ENCODE measurements at regions of chr19 and their contacts with region 1.

Region 1: GRCh38 chr19:18251587-18252369 is 22.5 kb downstream of the IQCN start:
- DNase-seq: peak; percentile 62
- ATAC-seq: peak; percentile 89
- H3K4me3 ChIP-seq: no peak overlapping the region
- H3K27ac ChIP-seq: no peak overlapping the region
- H3K4me1 ChIP-seq: no peaks in the 10 kb centered on the region
- H3K27me3 ChIP-seq: no peaks in the 10 kb centered on the region
- CTCF ChIP-seq: peak; percentile 81

Region 2: DNA sequence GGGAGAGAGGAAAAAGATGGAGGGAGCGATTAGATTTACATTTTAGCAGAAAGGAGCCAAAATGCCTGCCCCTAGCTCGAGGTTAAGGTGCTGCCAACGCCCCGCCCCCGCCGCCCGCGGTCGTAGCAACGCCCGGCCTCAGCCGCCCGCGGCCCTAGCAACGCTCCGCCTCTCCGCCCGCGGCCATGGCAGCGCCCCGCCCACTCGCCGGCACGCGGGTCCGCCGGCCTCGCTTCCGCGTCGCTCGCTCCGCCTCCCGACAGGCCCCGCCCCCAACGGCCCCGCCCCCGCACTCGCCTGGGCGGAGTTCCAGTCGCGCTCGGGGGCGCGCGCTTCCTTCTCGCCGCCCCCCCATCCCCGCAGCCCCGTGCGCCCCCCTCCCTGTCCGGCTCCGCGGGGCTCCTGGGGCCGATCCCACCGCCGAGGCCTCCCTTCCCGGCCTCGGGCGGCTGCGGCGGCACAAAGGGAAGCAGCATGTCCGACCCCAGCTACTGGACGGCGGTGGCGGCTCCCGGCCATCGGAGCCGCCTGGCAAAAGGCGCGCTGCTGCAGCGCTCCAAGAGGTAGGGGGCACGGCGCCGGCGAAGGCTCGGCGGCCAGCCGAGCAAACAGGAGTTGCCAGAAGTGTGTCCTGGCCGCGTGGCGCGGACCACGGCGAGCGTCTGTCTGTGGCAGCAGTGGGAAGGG is 133.9 kb before region 1 on chr19:
- CTCF ChIA-PET with region 1: interaction called, 15 read pairs
- POLR2A ChIA-PET with region 1: no interaction called
- in situ Hi-C with region 1: no loop called
- intact Hi-C with region 1: no loop called
- DNase-seq: no peak
- ATAC-seq: peak; percentile 92
- H3K4me3 ChIP-seq: peak overlapping the region; percentile 63 to 68
- H3K27ac ChIP-seq: peak overlapping the region; percentile 78
- H3K4me1 ChIP-seq: peaks cover 10% of the 10 kb centered on the region
- H3K27me3 ChIP-seq: no peaks in the 10 kb centered on the region
- CTCF ChIP-seq: no peak

Region 3: GRCh38 chr19:18192673-18193387 is 58.9 kb before region 1 on chr19 and contains the start of gene MPV17L2:
- CTCF ChIA-PET with region 1: interaction called, 10 read pairs
- POLR2A ChIA-PET with region 1: no interaction called
- in situ Hi-C with region 1: no loop called
- intact Hi-C with region 1: no loop called
- DNase-seq: peak; percentile 97
- ATAC-seq: peak; percentile 96
- H3K4me3 ChIP-seq: peak within 1 kb of the TSS; percentile 66 to 73
- H3K27ac ChIP-seq: peak within 1 kb of the TSS; percentile 86
- H3K4me1 ChIP-seq: peaks cover 7% of the 10 kb centered on the region
- H3K27me3 ChIP-seq: no peaks in the 10 kb centered on the region
- CTCF ChIP-seq: no peak
- total RNA-seq, gene MPV17L2: 13.3 TPM

Region 4: DNA sequence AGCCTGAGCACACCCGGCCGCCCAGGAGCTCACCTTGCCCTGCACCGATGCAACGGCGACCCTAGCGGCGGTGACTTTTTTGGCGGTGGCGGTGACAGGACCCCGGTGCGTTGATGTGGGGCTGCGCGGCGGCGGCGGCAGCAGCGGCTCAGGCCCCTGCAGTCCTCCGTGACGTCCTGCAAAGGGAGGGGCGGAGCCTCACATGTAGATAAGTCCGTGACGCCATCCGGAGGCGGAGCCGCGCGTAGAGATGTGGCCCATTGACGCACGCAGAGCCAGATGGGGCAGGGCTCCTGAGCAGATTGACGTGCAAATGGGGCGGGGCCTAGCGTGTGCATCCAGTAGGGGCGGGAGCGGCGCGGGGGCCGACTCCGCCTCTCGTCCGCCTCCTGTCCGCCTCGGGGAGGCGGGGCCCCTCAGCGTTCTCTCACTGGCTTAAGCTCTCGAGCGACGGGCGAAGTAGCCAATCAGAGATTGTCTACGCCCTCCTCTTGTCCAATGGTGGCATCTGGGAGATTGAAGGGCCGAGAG is 47.9 kb before region 1 on chr19 and contains the start of gene RAB3A:
- CTCF ChIA-PET with region 1: interaction called, 10 read pairs
- POLR2A ChIA-PET with region 1: no interaction called
- in situ Hi-C with region 1: no loop called
- intact Hi-C with region 1: loop called (anchors 5 kb)
- DNase-seq: peak; percentile 98
- ATAC-seq: peak; percentile 97
- H3K4me3 ChIP-seq: peak within 1 kb of the TSS; percentile 81 to 90
- H3K27ac ChIP-seq: peak within 1 kb of the TSS; percentile 83
- H3K4me1 ChIP-seq: peaks cover 3% of the 10 kb centered on the region; the same call in 1 of the 2 replicates
- H3K27me3 ChIP-seq: no peaks in the 10 kb centered on the region
- CTCF ChIP-seq: no peak
- total RNA-seq, gene RAB3A: 1.0 TPM

Region 5: GRCh38 chr19:18304458-18305310 is 52.9 kb after region 1 on chr19:
- CTCF ChIA-PET with region 1: no interaction called
- POLR2A ChIA-PET with region 1: no interaction called
- in situ Hi-C with region 1: no loop called
- intact Hi-C with region 1: no loop called
- DNase-seq: no peak
- ATAC-seq: peak; percentile 81
- H3K4me3 ChIP-seq: peak overlapping the region; percentile 22 to 36
- H3K27ac ChIP-seq: peak overlapping the region; percentile 95
- H3K4me1 ChIP-seq: peaks cover 60% of the 10 kb centered on the region
- H3K27me3 ChIP-seq: no peaks in the 10 kb centered on the region
- CTCF ChIP-seq: no peak